Activated CD8-positive, alpha-beta T cell treated with anti-CD3 and anti-CD28 coated beads, Interleukin-2, amount 10 ng/mL, durations not matched to agents 7 days and 5 days (primary cell): ENCODE measurements at regions of chr14 and their contacts with region 1.

Region 1: GRCh38 chr14:24310646-24311604 is at the start of gene LTB4R:
- DNase-seq: peak; percentile 77
- ATAC-seq: peak; percentile 89
- H3K4me3 Mint-ChIP-seq: peak within 1 kb of the TSS; percentile 72
- H3K27ac Mint-ChIP-seq: peak within 1 kb of the TSS; percentile 94
- H3K4me1 Mint-ChIP-seq: peaks cover 84% of the 10 kb centered on the region
- H3K27me3 Mint-ChIP-seq: no peaks in the 10 kb centered on the region
- total RNA-seq, gene LTB4R: 26.9 to 28.0 TPM

Region 2: DNA sequence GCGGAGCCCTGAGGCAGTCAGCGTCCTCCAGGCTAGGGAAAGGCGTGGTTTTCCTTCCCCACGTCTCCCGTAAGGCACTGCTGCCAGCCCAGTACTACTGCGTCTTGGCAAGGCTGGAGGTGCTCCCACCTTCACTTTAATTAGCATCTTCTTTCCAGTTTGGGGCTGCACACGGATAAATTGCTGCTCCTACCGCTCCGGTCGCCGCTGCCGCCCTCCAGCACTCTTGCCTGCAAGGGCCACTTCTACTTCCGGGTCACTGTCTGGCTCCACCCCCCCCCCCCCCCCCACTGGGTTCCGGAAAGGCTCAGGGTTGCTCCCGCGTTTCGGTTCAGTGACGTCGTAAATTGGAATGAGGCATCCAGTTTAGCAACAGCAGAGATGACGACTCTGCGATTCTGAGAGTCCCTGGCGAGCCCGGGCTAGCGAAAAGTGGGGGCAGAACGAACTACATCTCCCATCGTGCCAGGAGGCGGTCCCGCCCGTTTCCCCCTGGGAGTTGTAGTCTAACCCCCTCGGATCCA is 78.7 kb before region 1 on chr14 and contains the start of gene NEDD8:
- CTCF ChIA-PET with region 1: interaction called, 801 read pairs
- POLR2A ChIA-PET with region 1: interaction called, 3 read pairs
- DNase-seq: peak; percentile 93
- ATAC-seq: peak; percentile 89
- H3K4me3 Mint-ChIP-seq: peak within 1 kb of the TSS; percentile 89
- H3K27ac Mint-ChIP-seq: peak within 1 kb of the TSS; percentile 90
- H3K4me1 Mint-ChIP-seq: peaks cover 46% of the 10 kb centered on the region
- H3K27me3 Mint-ChIP-seq: no peaks in the 10 kb centered on the region
- total RNA-seq, gene NEDD8: 214 to 222 TPM

Region 3: DNA sequence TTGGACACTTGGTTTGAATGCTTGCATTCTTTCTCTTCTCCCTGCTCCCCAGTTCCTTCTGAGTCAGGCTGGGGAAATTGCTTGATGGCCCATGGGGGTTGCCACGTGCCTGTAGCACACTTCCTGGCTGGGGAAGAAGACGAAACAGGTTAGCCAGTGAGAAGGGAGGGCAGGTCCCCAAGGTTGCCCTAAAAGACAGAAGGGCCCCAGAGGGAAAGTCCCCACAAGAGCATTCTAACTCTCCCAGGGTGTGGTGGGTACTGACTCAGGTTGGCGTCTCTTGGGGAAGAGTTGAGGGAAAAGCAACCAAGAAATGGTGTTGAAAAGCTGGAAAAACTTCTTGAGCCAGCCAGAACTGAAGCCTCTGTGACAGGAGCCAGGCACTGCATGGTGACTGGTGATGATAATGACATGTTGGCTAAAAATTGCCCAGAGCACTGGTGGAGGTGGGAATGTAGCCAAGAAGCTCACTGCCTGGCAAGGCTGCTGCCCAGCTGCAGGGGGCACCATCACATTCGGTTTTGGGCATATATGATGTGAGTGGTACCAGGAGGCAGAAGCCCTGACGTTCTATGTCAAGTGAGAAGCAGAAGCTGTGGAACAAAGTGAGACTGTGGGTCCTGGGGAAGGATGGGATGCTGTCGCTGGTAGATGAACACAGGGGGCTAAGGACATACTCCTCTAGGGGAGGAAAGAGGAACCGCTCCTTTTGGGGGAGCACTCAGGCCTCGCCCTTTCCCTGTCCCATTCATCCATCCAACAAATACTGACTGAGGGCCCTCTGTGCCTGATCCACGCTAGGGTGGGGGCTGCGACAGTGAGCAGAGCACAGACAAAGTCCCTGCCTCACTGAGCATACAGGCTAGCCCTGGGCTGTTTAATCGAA is 31.4 kb before region 1 on chr14:
- CTCF ChIA-PET with region 1: interaction called, 57 read pairs
- POLR2A ChIA-PET with region 1: no interaction called
- DNase-seq: peak; percentile 44
- ATAC-seq: peak; percentile 69
- H3K4me3 Mint-ChIP-seq: no peak overlapping the region
- H3K27ac Mint-ChIP-seq: peak overlapping the region; percentile 73
- H3K4me1 Mint-ChIP-seq: peaks cover 30% of the 10 kb centered on the region
- H3K27me3 Mint-ChIP-seq: no peaks in the 10 kb centered on the region

Region 4: DNA sequence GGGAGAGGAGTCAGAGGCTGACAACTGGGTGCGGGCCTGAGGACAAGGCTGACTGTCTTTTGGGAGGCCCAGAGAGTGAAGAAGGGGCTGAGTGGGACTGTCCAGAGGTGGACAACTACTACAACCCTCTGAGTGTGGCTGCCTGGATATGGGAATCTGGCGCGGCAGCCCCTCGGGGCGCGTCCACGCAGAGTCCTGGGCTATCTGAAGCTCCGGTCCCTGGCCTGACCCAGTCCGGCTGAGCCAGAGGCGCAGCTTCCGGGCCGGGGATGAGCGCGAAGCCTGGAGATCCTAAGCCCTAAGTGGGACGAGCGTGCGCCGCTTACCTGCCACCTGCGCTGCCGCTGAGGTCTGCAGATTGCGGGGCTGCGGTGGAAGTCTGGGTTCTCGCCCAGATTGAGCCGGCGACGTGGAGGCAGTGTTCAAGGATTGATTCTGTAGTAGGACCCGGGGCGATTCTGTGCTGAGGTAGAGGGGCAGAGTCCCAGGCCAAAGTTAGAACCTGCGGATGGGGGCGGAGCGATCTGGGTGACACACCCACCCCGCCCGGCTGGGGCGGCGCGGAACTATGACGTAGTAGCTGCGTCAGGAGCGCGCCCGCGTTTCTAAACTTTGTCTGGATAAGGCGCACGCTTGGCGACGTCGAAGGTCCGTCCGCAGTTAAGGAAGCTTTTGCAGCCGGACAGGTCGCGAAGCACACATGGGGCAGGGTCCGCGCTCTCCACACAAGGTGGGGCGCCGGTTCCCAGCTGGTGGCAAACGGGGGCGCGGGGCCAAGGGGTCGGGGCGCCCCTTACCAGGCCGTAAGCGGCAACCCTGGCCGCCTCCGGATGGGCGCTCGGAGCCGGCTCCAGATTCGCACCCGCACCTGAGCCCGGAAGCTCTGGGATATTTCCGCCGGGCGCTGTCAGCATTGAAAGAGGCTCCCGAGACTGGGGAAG is 11.4 kb before region 1 on chr14 and contains the starts of genes DHRS1 and NOP9:
- CTCF ChIA-PET with region 1: interaction called, 134 read pairs
- POLR2A ChIA-PET with region 1: interaction called, 16 read pairs
- DNase-seq: peak; percentile 94
- ATAC-seq: peak; percentile 83
- H3K4me3 Mint-ChIP-seq: peak within 1 kb of the TSS; percentile 91
- H3K27ac Mint-ChIP-seq: peak within 1 kb of the TSS; percentile 91
- H3K4me1 Mint-ChIP-seq: peaks cover 53% of the 10 kb centered on the region
- H3K27me3 Mint-ChIP-seq: no peaks in the 10 kb centered on the region
- total RNA-seq, gene DHRS1: 28.6 to 33.9 TPM
- total RNA-seq, gene NOP9: 35.2 to 36.7 TPM

Region 5: GRCh38 chr14:24442273-24443052 is 131.5 kb after region 1 on chr14 and contains the start of gene SDR39U1:
- CTCF ChIA-PET with region 1: interaction called, 41 read pairs
- POLR2A ChIA-PET with region 1: interaction called, 6 read pairs
- DNase-seq: peak; percentile 99
- ATAC-seq: peak; percentile 91
- H3K4me3 Mint-ChIP-seq: peak within 1 kb of the TSS; percentile 96
- H3K27ac Mint-ChIP-seq: peak within 1 kb of the TSS; percentile 98
- H3K4me1 Mint-ChIP-seq: peaks cover 53% of the 10 kb centered on the region
- H3K27me3 Mint-ChIP-seq: no peaks in the 10 kb centered on the region
- total RNA-seq, gene SDR39U1: 47.6 to 58.6 TPM